Natural killer cell (primary cell): ENCODE measurements at regions of chr1 and their contacts with region 1.

Region 1: GRCh38 chr1:25247024-25247828 is at the start of gene RSRP1:
- DNase-seq: peak; percentile 99 to 100
- ATAC-seq: peak; percentile 83 to 93 (median 83)
- H3K4me3 ChIP-seq: peak within 1 kb of the TSS; percentile 99
- H3K4me3 Mint-ChIP-seq: peak within 1 kb of the TSS; percentile 97
- H3K27ac ChIP-seq: peak within 1 kb of the TSS; percentile 97
- H3K27ac Mint-ChIP-seq: peak within 1 kb of the TSS; percentile 98
- H3K4me1 ChIP-seq: peaks cover 21% of the 10 kb centered on the region
- H3K4me1 Mint-ChIP-seq: peaks cover 40 to 47% of the 10 kb centered on the region in 2 donors
- H3K27me3 ChIP-seq: no peaks in the 10 kb centered on the region
- H3K27me3 Mint-ChIP-seq: no peaks in the 10 kb centered on the region
- CTCF ChIP-seq: no peak
- total RNA-seq, gene RSRP1: 473 to 602 (median 589) TPM

Region 2: DNA sequence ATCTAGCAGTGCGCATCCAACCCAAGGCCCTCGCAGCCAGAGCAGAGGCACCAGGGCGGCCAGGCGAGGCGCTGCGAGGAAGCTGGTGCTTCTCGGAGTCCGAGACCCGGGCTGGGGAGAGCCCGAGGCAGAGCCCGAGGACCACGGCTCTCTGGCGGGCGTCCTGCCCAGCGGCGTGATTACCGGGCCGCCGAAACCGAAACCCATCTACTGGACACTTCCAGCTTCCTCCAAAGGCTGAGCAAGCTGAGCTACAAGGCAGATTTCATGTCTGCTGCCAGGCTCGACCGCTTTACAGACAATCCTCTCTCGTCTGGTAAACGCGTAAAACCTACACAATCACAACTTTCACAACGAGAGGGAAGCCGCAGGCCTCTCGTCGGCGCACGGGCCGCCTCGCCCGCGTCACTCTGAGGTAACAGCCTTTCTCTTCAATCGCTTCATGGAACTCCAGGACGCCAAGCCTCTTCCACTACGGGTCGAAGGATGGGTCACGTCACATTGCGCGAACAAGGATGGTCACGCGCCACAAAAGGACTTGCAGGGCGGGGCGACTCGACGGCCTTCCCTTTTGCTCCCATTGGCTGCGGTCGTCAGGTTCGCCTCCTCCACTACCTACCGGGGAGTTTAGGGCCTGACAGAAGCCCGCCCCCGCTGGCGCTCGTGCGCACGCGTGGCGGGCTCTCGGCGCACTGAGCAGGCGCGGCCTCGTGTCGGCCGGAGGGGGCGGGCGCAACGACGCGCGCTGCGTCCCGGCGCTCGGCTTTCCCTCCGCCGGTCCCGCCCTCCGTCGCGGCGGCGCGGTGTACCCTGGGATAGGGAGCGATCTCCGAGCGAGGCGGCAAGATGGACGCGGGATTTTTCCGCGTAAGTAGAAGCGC is 604.5 kb before region 1 on chr1 and contains the start of gene SRRM1:
- intact Hi-C with region 1: loop called (anchors 2 kb)
- DNase-seq: peak; percentile 96 to 100
- ATAC-seq: peak; percentile 86 to 96 (median 87)
- H3K4me3 ChIP-seq: peak within 1 kb of the TSS; percentile 98
- H3K4me3 Mint-ChIP-seq: peak within 1 kb of the TSS; percentile 97
- H3K27ac ChIP-seq: peak within 1 kb of the TSS; percentile 100
- H3K27ac Mint-ChIP-seq: peak within 1 kb of the TSS; percentile 96 to 98
- H3K4me1 ChIP-seq: peaks cover 19% of the 10 kb centered on the region
- H3K4me1 Mint-ChIP-seq: peaks cover 44 to 49% of the 10 kb centered on the region in 2 donors
- H3K27me3 ChIP-seq: no peaks in the 10 kb centered on the region
- H3K27me3 Mint-ChIP-seq: no peaks in the 10 kb centered on the region
- CTCF ChIP-seq: no peak
- total RNA-seq, gene SRRM1: 291 to 314 (median 302) TPM

Region 3: DNA sequence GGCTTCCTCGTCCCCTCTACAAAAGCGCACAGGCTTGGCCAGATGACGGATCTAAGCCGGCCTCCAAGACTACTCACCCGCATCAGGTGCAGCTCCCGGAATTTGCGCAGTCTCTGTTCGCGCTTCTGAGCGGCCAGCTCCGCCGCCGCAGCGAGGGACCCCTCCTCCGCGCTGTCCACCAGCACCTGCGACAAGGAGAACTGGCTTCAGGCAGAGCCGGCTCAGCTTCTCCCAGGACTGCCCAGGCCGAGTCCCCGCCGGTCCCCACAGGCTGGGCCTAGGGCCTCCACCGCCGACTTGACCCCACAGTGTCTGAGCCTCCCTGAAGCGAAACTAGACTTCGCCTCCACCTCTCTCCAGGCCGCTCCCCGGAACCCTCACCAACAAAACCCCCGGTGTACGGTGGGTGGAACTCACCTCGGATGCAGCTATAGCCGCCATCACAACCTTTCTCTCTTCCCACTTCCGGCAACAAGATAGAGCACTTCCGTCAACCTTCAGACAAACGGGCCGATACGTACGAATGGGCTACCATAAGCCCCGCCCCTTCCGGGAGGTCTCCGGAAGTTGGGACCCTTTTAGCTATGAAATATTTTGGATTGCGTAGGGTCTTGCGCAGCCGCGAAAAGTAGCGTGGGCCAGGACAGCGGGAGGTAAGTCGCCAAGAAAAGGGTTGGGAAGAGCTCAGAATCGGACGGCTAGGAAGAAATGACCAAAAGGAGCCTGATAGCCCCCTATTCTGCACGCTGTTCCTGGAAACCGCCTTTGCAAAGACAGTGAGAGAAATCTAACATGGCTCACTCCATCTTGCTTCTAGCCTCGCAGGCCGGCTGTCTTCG is 15.0 kb before region 1 on chr1 and contains the start of gene SYF2:
- intact Hi-C with region 1: loop called (anchors 1 kb)
- DNase-seq: peak; percentile 85 to 97
- ATAC-seq: peak; percentile 87 to 95 (median 91)
- H3K4me3 ChIP-seq: peak within 1 kb of the TSS; percentile 68
- H3K4me3 Mint-ChIP-seq: no peak within 1 kb of the TSS
- H3K27ac ChIP-seq: peak within 1 kb of the TSS; percentile 87
- H3K27ac Mint-ChIP-seq: no peak within 1 kb of the TSS
- H3K4me1 ChIP-seq: peaks cover 21% of the 10 kb centered on the region
- H3K4me1 Mint-ChIP-seq: peaks cover 0 to 5% of the 10 kb centered on the region in 2 donors
- H3K27me3 ChIP-seq: no peaks in the 10 kb centered on the region
- H3K27me3 Mint-ChIP-seq: no peaks in the 10 kb centered on the region
- CTCF ChIP-seq: no peak
- total RNA-seq, gene SYF2: 67.9 to 92.2 (median 75.3) TPM

Region 4: GRCh38 chr1:25338188-25338981 is 91.2 kb after region 1 on chr1 and contains the start of gene TMEM50A:
- intact Hi-C with region 1: loop called (anchors 5 kb)
- DNase-seq: peak; percentile 89 to 93
- ATAC-seq: peak; percentile 71 to 92 (median 77)
- H3K4me3 ChIP-seq: peak within 1 kb of the TSS; percentile 99
- H3K4me3 Mint-ChIP-seq: peak within 1 kb of the TSS; percentile 94
- H3K27ac ChIP-seq: peak within 1 kb of the TSS; percentile 98
- H3K27ac Mint-ChIP-seq: peak within 1 kb of the TSS; percentile 92 to 97
- H3K4me1 ChIP-seq: peaks cover 8% of the 10 kb centered on the region
- H3K4me1 Mint-ChIP-seq: peaks cover 31 to 46% of the 10 kb centered on the region in 2 donors
- H3K27me3 ChIP-seq: no peaks in the 10 kb centered on the region
- H3K27me3 Mint-ChIP-seq: no peaks in the 10 kb centered on the region
- CTCF ChIP-seq: no peak
- total RNA-seq, gene TMEM50A: 99.9 to 117 (median 107) TPM

Region 5: DNA sequence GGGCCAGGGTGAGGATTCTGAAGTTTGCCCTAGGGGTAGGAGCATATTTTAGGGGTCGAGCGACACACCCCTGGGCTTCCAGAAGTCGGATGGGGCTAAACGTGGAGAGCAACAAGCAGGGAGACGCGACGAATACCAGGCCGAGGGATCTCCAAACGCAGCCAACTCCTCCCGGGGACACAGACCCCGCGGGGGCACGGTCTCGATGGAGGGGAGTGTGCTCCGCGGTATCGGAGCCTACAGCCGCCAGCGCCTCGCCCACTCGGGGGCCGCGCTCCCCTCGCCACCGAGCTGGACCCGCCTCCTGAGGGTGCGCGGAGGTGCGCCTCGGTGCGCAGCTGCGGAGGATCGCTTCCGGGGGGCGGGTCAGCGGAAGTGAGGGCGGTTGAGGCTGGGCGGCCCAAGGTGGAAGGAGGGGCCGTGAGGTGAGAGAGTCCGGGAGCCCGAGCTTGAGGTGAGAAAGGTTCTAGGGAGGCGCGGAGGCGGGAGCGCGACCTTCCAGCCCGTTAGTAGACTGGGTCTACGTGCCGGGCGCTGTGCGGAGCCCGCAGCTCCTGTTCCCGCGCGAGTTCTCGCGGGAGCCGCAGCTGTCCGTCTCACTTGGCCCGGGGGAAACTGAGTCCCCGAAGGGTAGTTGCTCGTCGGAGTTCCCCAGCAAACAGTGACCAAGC is 572.5 kb after region 1 on chr1 and contains the start of gene MTFR1L:
- intact Hi-C with region 1: loop called (anchors 5 kb)
- DNase-seq: peak; percentile 91 to 96
- ATAC-seq: peak; percentile 79 to 92 (median 84)
- H3K4me3 ChIP-seq: peak within 1 kb of the TSS; percentile 98
- H3K4me3 Mint-ChIP-seq: peak within 1 kb of the TSS; percentile 97
- H3K27ac ChIP-seq: peak within 1 kb of the TSS; percentile 96
- H3K27ac Mint-ChIP-seq: peak within 1 kb of the TSS; percentile 94 to 95
- H3K4me1 ChIP-seq: peaks cover 26% of the 10 kb centered on the region
- H3K4me1 Mint-ChIP-seq: peaks cover 30 to 42% of the 10 kb centered on the region in 2 donors
- H3K27me3 ChIP-seq: no peaks in the 10 kb centered on the region
- H3K27me3 Mint-ChIP-seq: no peaks in the 10 kb centered on the region
- CTCF ChIP-seq: no peak
- total RNA-seq, gene MTFR1L: 33.4 to 39.0 (median 39.0) TPM